Right cardiac atrium (tissue), 5 donors: ENCODE measurements at regions of chr5 and their contacts with region 1.

Region 1: DNA sequence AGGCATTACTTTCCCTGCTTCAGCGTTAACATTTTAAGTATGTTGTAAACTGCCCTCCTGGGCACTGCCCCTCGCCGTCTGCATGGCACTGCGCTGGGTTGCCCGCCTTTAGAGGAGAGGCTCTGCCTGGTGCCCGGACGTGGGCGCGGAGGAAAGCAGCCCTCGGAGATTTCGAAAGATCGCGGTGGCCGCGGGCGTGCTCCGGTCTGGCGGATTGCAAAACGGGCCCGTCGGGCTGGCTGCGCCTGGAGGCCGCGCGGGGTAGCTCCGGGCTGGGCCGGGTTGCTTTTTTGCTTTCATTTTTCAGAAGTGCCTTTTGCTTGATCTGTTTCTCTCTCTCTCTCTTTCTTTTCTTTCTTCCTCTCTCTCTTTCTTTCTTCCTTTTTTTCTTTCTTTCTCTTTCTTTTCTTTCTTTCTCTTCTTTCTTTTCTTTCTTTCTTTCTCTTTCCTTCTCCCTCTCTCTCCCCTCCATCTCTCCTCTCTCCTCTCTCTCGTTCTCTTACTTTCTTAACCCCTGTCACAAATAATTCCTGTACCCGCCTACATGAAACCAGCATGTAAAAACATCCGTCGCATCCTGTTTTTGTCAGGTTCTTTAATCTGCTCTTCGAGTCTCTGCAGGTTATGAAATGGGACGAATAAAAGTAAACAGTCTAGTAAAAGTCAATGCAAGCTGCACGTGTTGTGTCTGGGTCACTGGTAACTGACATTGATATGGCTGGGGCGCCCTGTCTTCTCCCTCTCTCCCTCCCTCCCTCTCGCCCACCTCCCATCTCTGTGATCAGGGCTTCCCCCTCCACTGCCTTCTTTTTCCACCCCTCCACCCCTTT is 1.7 kb downstream of the FST start:
- DNase-seq: peak; percentile 81 to 92 (median 91)
- ATAC-seq: peak; percentile 81 to 87
- H3K4me3 ChIP-seq: peak overlapping the region; percentile 91
- H3K27ac ChIP-seq: no peak overlapping the region
- H3K4me1 ChIP-seq: no peaks in the 10 kb centered on the region
- H3K27me3 ChIP-seq: no peaks in the 10 kb centered on the region

Region 2: DNA sequence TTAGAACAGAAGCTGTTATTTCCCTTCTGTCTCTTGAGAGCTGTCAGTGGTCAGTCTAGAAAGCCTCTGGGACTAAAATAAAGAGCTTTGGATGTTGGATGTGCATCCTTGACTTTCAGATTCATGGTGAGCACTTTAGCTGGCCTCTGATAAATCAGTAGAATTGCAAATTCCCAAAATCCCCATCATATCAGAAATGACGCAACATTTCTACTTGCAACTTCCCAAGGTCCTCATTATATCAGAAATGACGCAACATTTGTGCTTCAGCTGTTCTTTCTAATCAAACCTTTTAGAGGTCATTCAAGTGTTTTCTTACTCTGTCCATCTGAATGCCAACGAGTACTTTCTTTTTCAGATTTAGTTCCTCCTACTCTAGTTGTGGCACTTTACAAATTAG is 205.3 kb before region 1 on chr5:
- intact Hi-C with region 1: no loop called
- DNase-seq: no peak
- ATAC-seq: peak; percentile 73 to 97
- H3K4me3 ChIP-seq: no peak overlapping the region
- H3K27ac ChIP-seq: no peak overlapping the region
- H3K4me1 ChIP-seq: no peaks in the 10 kb centered on the region
- H3K27me3 ChIP-seq: no peaks in the 10 kb centered on the region

Region 3: GRCh38 chr5:53590759-53591158 is 108.7 kb after region 1 on chr5:
- intact Hi-C with region 1: no loop called
- DNase-seq: no peak
- ATAC-seq: no peak
- H3K4me3 ChIP-seq: no peak overlapping the region
- H3K27ac ChIP-seq: no peak overlapping the region
- H3K4me1 ChIP-seq: peaks cover 1% of the 10 kb centered on the region
- H3K27me3 ChIP-seq: no peaks in the 10 kb centered on the region

Region 4: DNA sequence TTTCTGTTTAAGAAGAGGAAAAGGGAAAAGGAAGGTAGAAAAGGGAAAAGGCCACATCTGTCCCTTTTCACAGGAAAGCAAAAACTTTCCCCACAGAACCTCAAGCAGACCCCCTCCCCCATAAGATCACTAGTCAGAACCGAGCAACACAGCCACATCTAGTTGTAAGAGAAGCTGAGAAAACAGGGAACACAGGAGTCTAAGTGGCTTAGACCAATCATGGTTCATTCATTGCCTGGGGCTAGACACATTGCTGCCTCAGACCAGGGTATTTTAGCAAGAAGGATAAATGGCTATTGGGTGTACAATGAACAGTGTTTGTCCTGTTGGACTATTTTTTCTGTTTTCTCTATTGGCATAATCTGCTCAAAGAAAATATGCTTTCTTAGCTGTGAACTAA is 730.2 kb after region 1 on chr5:
- intact Hi-C with region 1: loop called in 2 of 4 experiments (anchors 5 kb)
- DNase-seq: no peak
- ATAC-seq: no peak
- H3K4me3 ChIP-seq: no peak overlapping the region
- H3K27ac ChIP-seq: no peak overlapping the region
- H3K4me1 ChIP-seq: no peaks in the 10 kb centered on the region
- H3K27me3 ChIP-seq: no peaks in the 10 kb centered on the region

Region 5: GRCh38 chr5:54217826-54218503 is 735.9 kb after region 1 on chr5:
- intact Hi-C with region 1: loop called (anchors 2 to 10 kb)
- DNase-seq: no peak
- ATAC-seq: peak; percentile 84 to 85
- H3K4me3 ChIP-seq: no peak overlapping the region
- H3K27ac ChIP-seq: no peak overlapping the region
- H3K4me1 ChIP-seq: peaks cover 1% of the 10 kb centered on the region
- H3K27me3 ChIP-seq: no peaks in the 10 kb centered on the region

Region 6: GRCh38 chr5:54229041-54229780 is 747.1 kb after region 1 on chr5:
- intact Hi-C with region 1: loop called in 2 of 4 experiments (anchors 5 to 10 kb)
- DNase-seq: peak; percentile 66 to 87 (median 83)
- ATAC-seq: peak; percentile 63 to 67
- H3K4me3 ChIP-seq: no peak overlapping the region
- H3K27ac ChIP-seq: no peak overlapping the region
- H3K4me1 ChIP-seq: peaks cover 3% of the 10 kb centered on the region
- H3K27me3 ChIP-seq: no peaks in the 10 kb centered on the region

Region 7: GRCh38 chr5:54590824-54591223 is 1108.7 kb after region 1 on chr5:
- intact Hi-C with region 1: no loop called
- DNase-seq: no peak
- ATAC-seq: no peak
- H3K4me3 ChIP-seq: no peak overlapping the region
- H3K27ac ChIP-seq: no peak overlapping the region
- H3K4me1 ChIP-seq: no peaks in the 10 kb centered on the region
- H3K27me3 ChIP-seq: no peaks in the 10 kb centered on the region